Endothelial cell of umbilical vein (primary cell): ENCODE measurements at regions of chr7 and their contacts with region 1.

Region 1: GRCh38 chr7:135672560-135673359 is 10.4 kb downstream of the STMP1 start:
- DNase-seq: peak; percentile 80
- H3K4me3 ChIP-seq: no peak overlapping the region
- H3K27ac ChIP-seq: peak overlapping the region; percentile 84
- H3K4me1 ChIP-seq: peaks cover 24% of the 10 kb centered on the region
- H3K27me3 ChIP-seq: no peaks in the 10 kb centered on the region
- CTCF ChIP-seq: peak; percentile 70 to 75
- POLR2A ChIP-seq: no peak

Region 2: DNA sequence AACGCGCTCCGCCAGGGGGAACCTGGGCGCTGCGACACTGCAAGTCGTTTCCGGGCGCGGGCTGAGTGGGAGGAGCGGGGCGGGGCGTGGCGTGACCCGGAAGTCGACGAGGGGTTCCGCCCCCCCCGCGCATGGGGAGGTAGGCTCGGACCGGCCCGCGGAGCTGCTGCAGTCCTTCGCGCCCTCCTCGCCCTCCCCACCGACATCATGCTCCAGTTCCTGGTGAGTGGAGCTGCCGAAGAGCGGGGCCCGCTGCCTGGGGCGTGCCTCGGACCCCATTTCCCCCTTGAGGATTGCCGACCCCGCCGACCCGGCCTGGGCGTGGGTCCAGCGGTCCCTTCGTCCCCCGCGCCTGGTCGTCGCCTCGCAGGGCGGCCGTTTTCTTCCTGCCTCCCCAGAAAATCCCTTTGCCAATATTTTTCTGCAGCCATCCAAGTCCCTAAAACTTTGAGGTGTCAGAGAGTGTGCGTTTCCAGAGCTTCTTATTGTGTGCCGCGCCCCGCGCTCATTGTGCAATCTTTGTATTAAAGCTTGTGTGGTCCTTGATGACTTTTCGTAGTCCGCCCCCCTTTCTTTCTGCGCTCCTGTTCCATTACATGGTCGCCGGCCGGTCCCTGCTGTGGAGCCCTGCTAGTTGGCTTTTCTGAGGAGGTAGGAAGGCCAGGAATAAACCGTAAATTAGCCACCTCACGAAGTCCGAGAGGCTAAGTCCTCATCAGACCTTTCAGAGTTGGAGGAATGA is 10.2 kb before region 1 on chr7 and contains the start of gene STMP1:
- CTCF ChIA-PET with region 1: interaction called, 51 read pairs
- POLR2A ChIA-PET with region 1: interaction called, 3 read pairs
- dilution Hi-C with region 1: no loop called
- intact Hi-C with region 1: loop called (anchors 1 kb)
- DNase-seq: peak; percentile 95
- H3K4me3 ChIP-seq: peak within 1 kb of the TSS; percentile 68 to 91 (median 86)
- H3K27ac ChIP-seq: peak within 1 kb of the TSS; percentile 91
- H3K4me1 ChIP-seq: peaks cover 36% of the 10 kb centered on the region
- H3K27me3 ChIP-seq: no peaks in the 10 kb centered on the region
- CTCF ChIP-seq: peak in 1 of 2 donors; percentile 77
- POLR2A ChIP-seq: peak; percentile 96
- total RNA-seq, gene STMP1: 21.4 and 31.3 TPM in 2 replicates

Region 3: GRCh38 chr7:135690566-135690965 is 17.8 kb after region 1 on chr7:
- CTCF ChIA-PET with region 1: interaction called, 53 read pairs
- POLR2A ChIA-PET with region 1: no interaction called
- dilution Hi-C with region 1: no loop called
- intact Hi-C with region 1: no loop called
- DNase-seq: peak; percentile 49
- H3K4me3 ChIP-seq: no peak overlapping the region
- H3K27ac ChIP-seq: no peak overlapping the region
- H3K4me1 ChIP-seq: peaks cover 18% of the 10 kb centered on the region
- H3K27me3 ChIP-seq: no peaks in the 10 kb centered on the region
- CTCF ChIP-seq: no peak
- POLR2A ChIP-seq: no peak

Region 4: DNA sequence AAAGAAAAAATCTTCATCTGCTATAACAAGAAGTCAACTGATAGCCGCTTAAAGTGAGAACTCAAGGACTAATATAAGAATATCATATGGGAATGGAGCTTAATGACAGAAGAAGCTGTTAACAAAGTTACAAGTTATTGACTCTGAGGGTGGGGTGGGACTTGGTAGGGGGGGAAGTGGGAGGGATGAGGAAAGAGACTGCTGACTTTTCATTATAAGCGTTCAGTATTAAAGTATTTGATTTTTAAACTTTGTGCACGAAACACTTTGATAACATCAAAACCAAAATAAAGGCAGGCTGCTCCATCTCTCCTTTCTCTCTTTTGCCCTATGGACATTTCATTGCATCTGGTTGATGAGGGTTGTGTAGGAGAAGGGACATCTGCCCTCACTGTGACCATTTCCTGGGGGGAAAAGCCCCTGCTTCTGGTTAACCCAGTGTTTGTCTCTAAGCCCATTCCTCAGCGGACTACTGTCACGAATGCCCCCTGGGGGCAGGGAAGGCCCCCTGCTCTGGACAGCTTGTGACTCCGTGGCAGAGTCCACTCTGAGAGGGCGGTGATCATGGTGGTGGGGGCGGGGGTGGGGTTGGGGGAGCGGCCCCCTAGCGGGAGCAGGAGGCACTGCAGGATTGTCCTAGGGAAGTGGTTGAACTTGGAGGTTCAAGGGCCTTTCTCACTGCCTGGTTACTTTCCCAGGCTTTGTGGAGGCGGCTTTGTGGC is 37.8 kb after region 1 on chr7:
- CTCF ChIA-PET with region 1: interaction called, 12 read pairs
- POLR2A ChIA-PET with region 1: no interaction called
- dilution Hi-C with region 1: no loop called
- intact Hi-C with region 1: loop called (anchors 1 kb)
- DNase-seq: no peak
- H3K4me3 ChIP-seq: no peak overlapping the region
- H3K27ac ChIP-seq: no peak overlapping the region
- H3K4me1 ChIP-seq: peaks cover 18% of the 10 kb centered on the region
- H3K27me3 ChIP-seq: no peaks in the 10 kb centered on the region
- CTCF ChIP-seq: peak; percentile 31 to 66
- POLR2A ChIP-seq: no peak

Region 5: GRCh38 chr7:135795846-135796570 is 123.2 kb after region 1 on chr7:
- CTCF ChIA-PET with region 1: interaction called, 76 read pairs
- POLR2A ChIA-PET with region 1: no interaction called
- dilution Hi-C with region 1: no loop called
- intact Hi-C with region 1: loop called (anchors 1 kb)
- DNase-seq: no peak
- H3K4me3 ChIP-seq: no peak overlapping the region
- H3K27ac ChIP-seq: no peak overlapping the region
- H3K4me1 ChIP-seq: no peaks in the 10 kb centered on the region
- H3K27me3 ChIP-seq: peaks cover 0 to 3% of the 10 kb centered on the region in 2 experiments
- CTCF ChIP-seq: no peak
- POLR2A ChIP-seq: no peak

Region 6: GRCh38 chr7:135925210-135925609 is 252.4 kb after region 1 on chr7:
- CTCF ChIA-PET with region 1: no interaction called
- POLR2A ChIA-PET with region 1: no interaction called
- dilution Hi-C with region 1: no loop called
- intact Hi-C with region 1: loop called (anchors 5 kb)
- DNase-seq: no peak
- H3K4me3 ChIP-seq: no peak overlapping the region
- H3K27ac ChIP-seq: peak overlapping the region; percentile 79
- H3K4me1 ChIP-seq: peaks cover 14% of the 10 kb centered on the region
- H3K27me3 ChIP-seq: no peaks in the 10 kb centered on the region
- CTCF ChIP-seq: no peak
- POLR2A ChIP-seq: no peak

Region 7: DNA sequence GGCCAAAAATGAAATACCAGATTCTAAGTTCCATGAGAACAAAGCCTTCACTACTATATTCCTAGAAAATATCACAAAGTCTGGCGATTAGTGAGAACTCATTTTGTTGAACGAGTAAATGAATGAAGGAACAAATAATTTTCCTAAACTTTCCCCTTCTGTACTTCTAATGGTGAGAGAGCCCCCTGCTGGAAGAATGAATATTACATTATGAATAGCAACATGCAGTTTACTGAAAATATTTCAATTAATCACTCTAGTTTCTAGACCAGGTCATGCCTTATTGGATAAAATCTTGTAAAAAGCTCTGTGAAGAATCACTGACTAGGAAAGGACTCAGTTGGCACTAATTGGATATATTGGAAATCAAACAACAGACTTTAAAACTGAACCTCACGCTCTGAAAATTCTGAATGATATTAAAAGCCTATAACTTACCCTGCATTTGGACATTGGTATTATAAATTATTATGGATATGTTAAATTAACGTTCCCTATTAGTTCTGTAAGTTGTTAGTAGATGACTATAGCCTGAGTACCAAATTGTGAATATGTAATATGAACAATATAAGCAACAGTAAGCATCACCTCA is 336.8 kb after region 1 on chr7:
- CTCF ChIA-PET with region 1: interaction called, 22 read pairs
- POLR2A ChIA-PET with region 1: interaction called, 4 read pairs
- dilution Hi-C with region 1: no loop called
- intact Hi-C with region 1: loop called (anchors 1 kb)
- DNase-seq: peak; percentile 62
- H3K4me3 ChIP-seq: no peak overlapping the region
- H3K27ac ChIP-seq: no peak overlapping the region
- H3K4me1 ChIP-seq: no peaks in the 10 kb centered on the region
- H3K27me3 ChIP-seq: peaks cover 0 to 5% of the 10 kb centered on the region in 2 experiments
- CTCF ChIP-seq: peak; percentile 29 to 40
- POLR2A ChIP-seq: no peak

Region 8: GRCh38 chr7:136039577-136040345 is 367.0 kb after region 1 on chr7:
- CTCF ChIA-PET with region 1: no interaction called
- POLR2A ChIA-PET with region 1: no interaction called
- dilution Hi-C with region 1: no loop called
- intact Hi-C with region 1: no loop called
- DNase-seq: peak; percentile 55
- H3K4me3 ChIP-seq: no peak overlapping the region
- H3K27ac ChIP-seq: no peak overlapping the region
- H3K4me1 ChIP-seq: peaks cover 6% of the 10 kb centered on the region
- H3K27me3 ChIP-seq: no peaks in the 10 kb centered on the region
- CTCF ChIP-seq: no peak
- POLR2A ChIP-seq: no peak